ENCODE measurements at regions of chr10 and their contacts with region 1.

Region 1: DNA sequence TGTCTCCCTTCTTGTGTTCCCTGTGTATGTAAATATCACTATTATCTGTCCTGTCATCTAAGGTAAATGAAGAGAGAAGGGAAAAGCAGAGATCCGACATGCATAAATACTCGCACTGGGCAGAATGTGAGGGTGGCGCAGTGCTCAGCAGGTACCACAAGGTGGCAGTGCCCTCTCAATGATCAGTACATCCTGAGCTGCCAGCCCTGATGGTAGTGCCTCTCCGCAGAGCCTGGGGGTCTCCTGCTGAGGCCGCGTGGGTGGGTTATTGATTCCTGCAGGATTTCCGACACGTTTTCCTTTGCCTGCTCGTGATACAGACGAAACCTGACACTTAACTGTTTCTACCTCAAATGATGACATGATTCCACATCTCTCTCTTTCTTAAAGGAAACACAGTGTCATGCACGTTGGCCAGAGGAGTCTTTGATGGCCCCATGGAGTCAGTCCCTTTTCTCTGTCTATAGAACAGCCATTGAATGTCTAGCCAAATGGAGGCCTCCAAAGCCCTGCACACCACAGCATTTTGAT is 19.8 kb downstream of the RGR start:
- DNase-seq: peak; percentile 48
- ATAC-seq: peak; percentile 95
- H3K4me3 ChIP-seq: no peak overlapping the region
- H3K27ac ChIP-seq: no peak overlapping the region
- H3K4me1 ChIP-seq: peaks cover 0 to 17% of the 10 kb centered on the region in 2 experiments; a peak in 2 of 4 replicates
- H3K27me3 ChIP-seq: no peaks in the 10 kb centered on the region
- CTCF ChIP-seq: peak; percentile 80 to 96 (median 91)
- POLR2A ChIP-seq: no peak
- RAD21 ChIP-seq: peak; percentile 95

Region 2: GRCh38 chr10:84328418-84329195 is 63.9 kb after region 1 on chr10 and contains the start of gene CCSER2:
- CTCF ChIA-PET with region 1: interaction called, 9 read pairs
- POLR2A ChIA-PET with region 1: interaction called, 5 read pairs
- RAD21 ChIA-PET with region 1: no interaction called
- intact Hi-C with region 1: loop called (anchors 5 kb)
- DNase-seq: no peak
- ATAC-seq: peak; percentile 89
- H3K4me3 ChIP-seq: peak within 1 kb of the TSS; percentile 70 to 75
- H3K27ac ChIP-seq: peak within 1 kb of the TSS; percentile 82
- H3K4me1 ChIP-seq: peaks cover 11 to 28% of the 10 kb centered on the region in 2 experiments
- H3K27me3 ChIP-seq: no peaks in the 10 kb centered on the region
- CTCF ChIP-seq: no peak
- POLR2A ChIP-seq: peak; percentile 54
- RAD21 ChIP-seq: no peak
- total RNA-seq, gene CCSER2: 28.9 TPM

Region 3: GRCh38 chr10:84375011-84375410 is 110.3 kb after region 1 on chr10:
- CTCF ChIA-PET with region 1: interaction called, 4 read pairs
- POLR2A ChIA-PET with region 1: no interaction called
- RAD21 ChIA-PET with region 1: no interaction called
- intact Hi-C with region 1: loop called (anchors 2 kb)
- DNase-seq: peak; percentile 57
- ATAC-seq: peak; percentile 63
- H3K4me3 ChIP-seq: no peak overlapping the region
- H3K27ac ChIP-seq: no peak overlapping the region
- H3K4me1 ChIP-seq: no peaks in the 10 kb centered on the region
- H3K27me3 ChIP-seq: no peaks in the 10 kb centered on the region
- CTCF ChIP-seq: peak; percentile 60 to 80 (median 73); a peak in 5 of 6 replicates
- POLR2A ChIP-seq: no peak
- RAD21 ChIP-seq: peak; percentile 83

Region 4: DNA sequence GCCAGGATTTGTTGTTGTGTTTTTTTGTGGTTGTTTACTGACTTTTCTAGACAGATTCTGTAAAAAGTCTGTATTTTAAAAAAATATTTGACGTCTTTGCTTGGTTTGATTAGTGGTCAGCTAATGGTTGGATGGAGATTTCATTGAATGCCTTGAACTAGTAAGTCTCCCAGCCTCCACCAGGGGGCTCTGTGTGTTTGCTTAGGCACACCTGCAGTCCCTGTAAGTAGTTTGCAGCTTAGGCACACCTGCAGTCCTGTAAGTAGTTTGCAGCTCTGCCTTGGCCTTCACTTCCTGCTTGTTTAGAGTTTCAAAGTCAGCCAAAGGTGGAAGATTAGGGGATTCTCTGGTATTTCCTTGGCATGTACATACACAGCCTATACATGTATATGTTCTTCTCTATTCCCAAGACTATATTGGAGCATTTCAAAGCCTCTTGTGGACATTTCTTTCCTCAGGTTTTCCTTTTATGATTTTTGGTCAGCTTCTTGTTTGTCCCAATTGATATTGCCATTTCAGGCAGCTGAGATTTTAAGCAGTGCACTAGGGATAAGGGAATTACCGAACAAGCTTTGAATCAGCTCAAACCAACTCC is 165.3 kb after region 1 on chr10:
- CTCF ChIA-PET with region 1: interaction called, 10 read pairs
- POLR2A ChIA-PET with region 1: no interaction called
- RAD21 ChIA-PET with region 1: no interaction called
- intact Hi-C with region 1: loop called (anchors 10 kb)
- DNase-seq: peak; percentile 61
- ATAC-seq: peak; percentile 98
- H3K4me3 ChIP-seq: no peak overlapping the region
- H3K27ac ChIP-seq: no peak overlapping the region
- H3K4me1 ChIP-seq: peaks cover 0 to 6% of the 10 kb centered on the region in 2 experiments; a peak in 2 of 4 replicates
- H3K27me3 ChIP-seq: no peaks in the 10 kb centered on the region
- CTCF ChIP-seq: peak; percentile 78 to 92 (median 90)
- POLR2A ChIP-seq: no peak
- RAD21 ChIP-seq: peak; percentile 84

Region 5: DNA sequence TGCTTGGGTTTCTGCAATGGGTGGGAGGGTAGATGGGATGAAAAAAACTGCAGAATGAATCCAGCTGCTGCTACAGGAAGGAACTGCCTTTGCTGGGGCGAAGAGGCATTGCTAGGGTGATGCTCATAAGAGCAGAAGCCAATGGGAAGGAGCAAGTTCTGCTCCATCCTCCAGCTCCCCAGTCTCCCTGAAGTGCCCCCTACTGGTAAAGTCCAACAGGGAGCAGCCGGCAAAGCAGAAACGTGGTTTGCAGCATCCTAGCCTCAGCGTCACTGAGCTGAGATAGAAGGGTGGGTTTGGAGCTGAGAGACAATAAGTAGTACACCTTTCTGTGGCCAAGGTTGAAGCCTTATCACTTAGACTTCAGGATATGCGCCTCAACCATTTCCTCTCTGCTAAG is 284.2 kb after region 1 on chr10:
- CTCF ChIA-PET with region 1: interaction called, 10 read pairs
- POLR2A ChIA-PET with region 1: no interaction called
- RAD21 ChIA-PET with region 1: no interaction called
- intact Hi-C with region 1: no loop called
- DNase-seq: no peak
- ATAC-seq: peak; percentile 88
- H3K4me3 ChIP-seq: no peak overlapping the region
- H3K27ac ChIP-seq: no peak overlapping the region
- H3K4me1 ChIP-seq: no peaks in the 10 kb centered on the region
- H3K27me3 ChIP-seq: peaks cover 18% of the 10 kb centered on the region
- CTCF ChIP-seq: peak in 2 of 3 experiments; percentile 55 to 67; a peak in 4 of 6 replicates
- POLR2A ChIP-seq: no peak
- RAD21 ChIP-seq: no peak

Region 6: GRCh38 chr10:84613336-84614021 is 348.8 kb after region 1 on chr10:
- CTCF ChIA-PET with region 1: interaction called, 6 read pairs
- POLR2A ChIA-PET with region 1: no interaction called
- RAD21 ChIA-PET with region 1: no interaction called
- intact Hi-C with region 1: loop called (anchors 2 kb)
- DNase-seq: peak; percentile 72
- ATAC-seq: peak; percentile 98
- H3K4me3 ChIP-seq: no peak overlapping the region
- H3K27ac ChIP-seq: no peak overlapping the region
- H3K4me1 ChIP-seq: peaks cover 0 to 4% of the 10 kb centered on the region in 2 experiments; a peak in 1 of 4 replicates
- H3K27me3 ChIP-seq: peaks cover 13% of the 10 kb centered on the region
- CTCF ChIP-seq: peak; percentile 47 to 80 (median 59)
- POLR2A ChIP-seq: no peak
- RAD21 ChIP-seq: peak; percentile 81

Region 7: GRCh38 chr10:84715911-84716310 is 451.2 kb after region 1 on chr10:
- CTCF ChIA-PET with region 1: no interaction called
- POLR2A ChIA-PET with region 1: no interaction called
- RAD21 ChIA-PET with region 1: no interaction called
- intact Hi-C with region 1: loop called (anchors 10 kb)
- DNase-seq: peak; percentile 31
- ATAC-seq: peak; percentile 98
- H3K4me3 ChIP-seq: no peak overlapping the region
- H3K27ac ChIP-seq: no peak overlapping the region
- H3K4me1 ChIP-seq: no peaks in the 10 kb centered on the region
- H3K27me3 ChIP-seq: peaks cover 36% of the 10 kb centered on the region
- CTCF ChIP-seq: peak; percentile 59 to 93 (median 88); a peak in 5 of 6 replicates
- POLR2A ChIP-seq: no peak
- RAD21 ChIP-seq: peak; percentile 54